ENCODE measurements at regions of chr16 and their contacts with region 1.

Region 1: DNA sequence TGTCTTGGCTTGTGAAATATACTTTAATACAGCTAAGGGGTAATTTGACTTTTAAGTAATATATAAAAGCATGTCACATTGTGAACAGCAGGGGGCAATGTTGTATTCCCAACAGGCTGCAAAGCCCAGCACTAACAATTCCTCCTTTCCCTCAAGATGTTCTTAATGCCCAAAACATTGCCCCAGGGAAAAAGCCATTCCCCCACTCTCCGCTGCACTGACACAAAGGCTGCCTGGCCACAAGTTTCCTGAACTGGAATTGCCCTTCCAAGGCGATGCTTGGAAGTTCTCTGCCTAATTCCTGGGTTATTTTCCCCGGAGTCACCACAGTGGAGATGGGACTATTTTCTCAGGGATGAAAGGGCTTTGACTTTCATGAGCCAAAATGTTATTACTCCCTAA is 27.2 kb downstream of the CLEC16A start:
- DNase-seq: peak in 2 of 5 donors; percentile 35 to 36
- H3K4me3 ChIP-seq: no peak overlapping the region
- H3K4me3 Mint-ChIP-seq: no peak overlapping the region
- H3K27ac ChIP-seq: peak overlapping the region; percentile 27
- H3K27ac Mint-ChIP-seq: no peak overlapping the region
- H3K4me1 ChIP-seq: peaks cover 4% of the 10 kb centered on the region
- H3K4me1 Mint-ChIP-seq: peaks cover 5 to 14% (median 12%) of the 10 kb centered on the region in 3 donors
- H3K27me3 ChIP-seq: no peaks in the 10 kb centered on the region
- H3K27me3 Mint-ChIP-seq: no peaks in the 10 kb centered on the region

Region 2: DNA sequence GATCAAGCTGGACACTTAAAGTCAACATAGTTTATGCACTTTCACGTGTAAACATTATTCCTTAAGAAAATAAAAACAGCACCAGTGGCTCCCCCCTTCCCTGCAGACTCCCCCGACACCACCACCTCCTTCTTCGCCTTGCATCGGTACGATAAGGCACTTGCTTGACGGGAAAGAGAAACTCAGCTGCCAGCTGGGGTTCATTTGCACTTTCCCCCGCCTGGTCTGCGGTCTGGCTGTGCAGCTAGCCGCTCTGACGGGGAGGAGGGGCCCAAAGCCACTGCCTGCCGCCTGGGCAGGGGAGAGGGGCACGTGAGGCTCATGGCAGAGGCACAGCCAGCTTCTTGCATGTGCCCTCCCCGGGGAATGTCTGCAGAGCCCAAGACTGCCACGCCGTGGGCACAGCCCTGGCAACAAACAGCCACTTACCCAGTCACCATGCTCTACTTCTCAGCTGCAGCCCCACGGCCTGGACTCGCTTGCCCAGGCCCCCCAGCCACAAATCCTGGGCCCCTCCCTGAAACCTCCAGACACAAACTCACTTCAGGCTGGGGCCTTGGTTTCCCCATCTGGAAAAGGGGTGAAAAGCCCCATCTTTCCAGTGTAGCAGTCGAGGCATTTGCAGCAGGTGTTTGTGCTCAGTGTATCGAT is 326.1 kb after region 1 on chr16:
- CTCF ChIA-PET with region 1: interaction called, 11 read pairs
- POLR2A ChIA-PET with region 1: no interaction called
- DNase-seq: peak; percentile 46 to 80 (median 69)
- H3K4me3 ChIP-seq: peak overlapping the region; percentile 15
- H3K4me3 Mint-ChIP-seq: peak overlapping the region in 6 of 7 donors; percentile 65 to 86 (median 72)
- H3K27ac ChIP-seq: peak overlapping the region; percentile 6
- H3K27ac Mint-ChIP-seq: peak overlapping the region in 5 of 8 donors; percentile 37 to 87 (median 42)
- H3K4me1 ChIP-seq: peaks cover 22% of the 10 kb centered on the region
- H3K4me1 Mint-ChIP-seq: peaks cover 12 to 24% (median 20%) of the 10 kb centered on the region in 3 donors
- H3K27me3 ChIP-seq: no peaks in the 10 kb centered on the region
- H3K27me3 Mint-ChIP-seq: peaks cover 7 to 13% of the 10 kb centered on the region in 2 donors

Region 3: GRCh38 chr16:11356573-11357331 is 385.2 kb after region 1 on chr16:
- CTCF ChIA-PET with region 1: interaction called, 18 read pairs
- POLR2A ChIA-PET with region 1: no interaction called
- DNase-seq: peak; percentile 25 to 65 (median 38)
- H3K4me3 ChIP-seq: no peak overlapping the region
- H3K4me3 Mint-ChIP-seq: no peak overlapping the region
- H3K27ac ChIP-seq: no peak overlapping the region
- H3K27ac Mint-ChIP-seq: peak overlapping the region in 1 of 8 donors; percentile 24
- H3K4me1 ChIP-seq: peaks cover 54% of the 10 kb centered on the region
- H3K4me1 Mint-ChIP-seq: peaks cover 46 to 51% (median 50%) of the 10 kb centered on the region in 3 donors
- H3K27me3 ChIP-seq: peaks cover 9% of the 10 kb centered on the region
- H3K27me3 Mint-ChIP-seq: peaks cover 32 to 50% of the 10 kb centered on the region in 2 donors

Measured in CD8-positive, alpha-beta memory T cell (primary cell).